CD4-positive, alpha-beta T cell (primary cell): ENCODE measurements at regions of chr6 and their contacts with region 1.

Region 1: DNA sequence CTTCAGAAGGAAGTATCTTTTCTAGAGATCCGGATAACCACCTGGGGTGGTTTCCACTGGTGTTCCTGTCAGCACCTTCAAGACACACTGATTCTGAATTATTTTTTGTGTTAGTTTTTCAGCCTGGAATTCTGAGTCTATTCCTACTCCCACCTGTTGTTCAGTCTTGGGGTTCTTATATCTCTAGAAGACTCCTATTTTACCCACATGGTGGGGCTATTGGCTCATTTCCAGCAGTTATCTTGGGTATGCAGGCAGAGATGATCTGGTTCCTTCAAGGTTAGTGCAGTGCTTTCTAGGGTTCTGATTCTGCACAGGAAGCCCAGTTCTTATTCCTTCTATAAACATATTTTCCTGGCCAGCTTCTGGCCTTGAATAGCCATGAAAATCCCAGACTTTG is 175.6 kb upstream of the PDE7B start:
- DNase-seq: peak in 12 of 14 experiments; percentile 6 to 77 (median 23)
- ATAC-seq: peak; percentile 89
- H3K4me3 ChIP-seq: no peak overlapping the region
- H3K4me3 Mint-ChIP-seq: no peak overlapping the region
- H3K27ac ChIP-seq: no peak overlapping the region
- H3K27ac Mint-ChIP-seq: no peak overlapping the region
- H3K4me1 ChIP-seq: no peaks in the 10 kb centered on the region
- H3K4me1 Mint-ChIP-seq: no peaks in the 10 kb centered on the region
- H3K27me3 ChIP-seq: no peaks in the 10 kb centered on the region
- H3K27me3 Mint-ChIP-seq: no peaks in the 10 kb centered on the region
- CTCF ChIP-seq: peak; percentile 81

Region 2: GRCh38 chr6:135451693-135452092 is 224.2 kb before region 1 on chr6:
- CTCF ChIA-PET with region 1: no interaction called
- POLR2A ChIA-PET with region 1: no interaction called
- intact Hi-C with region 1: loop called (anchors 2 to 10 kb)
- DNase-seq: peak in 3 of 14 experiments; percentile 42 to 66 (median 64)
- ATAC-seq: peak; percentile 54
- H3K4me3 ChIP-seq: no peak overlapping the region
- H3K4me3 Mint-ChIP-seq: no peak overlapping the region
- H3K27ac ChIP-seq: no peak overlapping the region
- H3K27ac Mint-ChIP-seq: no peak overlapping the region
- H3K4me1 ChIP-seq: no peaks in the 10 kb centered on the region
- H3K4me1 Mint-ChIP-seq: no peaks in the 10 kb centered on the region
- H3K27me3 ChIP-seq: no peaks in the 10 kb centered on the region
- H3K27me3 Mint-ChIP-seq: no peaks in the 10 kb centered on the region
- CTCF ChIP-seq: peak; percentile 86

Region 3: GRCh38 chr6:135851442-135852271 is 175.8 kb after region 1 on chr6 and contains the start of gene PDE7B:
- CTCF ChIA-PET with region 1: no interaction called
- POLR2A ChIA-PET with region 1: no interaction called
- intact Hi-C with region 1: loop called in 1 of 2 experiments (anchors 5 kb)
- DNase-seq: peak in 13 of 14 experiments; percentile 2 to 73 (median 29)
- ATAC-seq: peak; percentile 83
- H3K4me3 ChIP-seq: peak within 1 kb of the TSS; percentile 45
- H3K4me3 Mint-ChIP-seq: peak within 1 kb of the TSS; percentile 87
- H3K27ac ChIP-seq: peak within 1 kb of the TSS; percentile 16 to 32
- H3K27ac Mint-ChIP-seq: peak within 1 kb of the TSS; percentile 81
- H3K4me1 ChIP-seq: peaks cover 18% of the 10 kb centered on the region
- H3K4me1 Mint-ChIP-seq: peaks cover 26% of the 10 kb centered on the region
- H3K27me3 ChIP-seq: no peaks in the 10 kb centered on the region
- H3K27me3 Mint-ChIP-seq: no peaks in the 10 kb centered on the region
- CTCF ChIP-seq: no peak
- total RNA-seq, gene PDE7B: 0.25 to 0.34 TPM

Region 4: DNA sequence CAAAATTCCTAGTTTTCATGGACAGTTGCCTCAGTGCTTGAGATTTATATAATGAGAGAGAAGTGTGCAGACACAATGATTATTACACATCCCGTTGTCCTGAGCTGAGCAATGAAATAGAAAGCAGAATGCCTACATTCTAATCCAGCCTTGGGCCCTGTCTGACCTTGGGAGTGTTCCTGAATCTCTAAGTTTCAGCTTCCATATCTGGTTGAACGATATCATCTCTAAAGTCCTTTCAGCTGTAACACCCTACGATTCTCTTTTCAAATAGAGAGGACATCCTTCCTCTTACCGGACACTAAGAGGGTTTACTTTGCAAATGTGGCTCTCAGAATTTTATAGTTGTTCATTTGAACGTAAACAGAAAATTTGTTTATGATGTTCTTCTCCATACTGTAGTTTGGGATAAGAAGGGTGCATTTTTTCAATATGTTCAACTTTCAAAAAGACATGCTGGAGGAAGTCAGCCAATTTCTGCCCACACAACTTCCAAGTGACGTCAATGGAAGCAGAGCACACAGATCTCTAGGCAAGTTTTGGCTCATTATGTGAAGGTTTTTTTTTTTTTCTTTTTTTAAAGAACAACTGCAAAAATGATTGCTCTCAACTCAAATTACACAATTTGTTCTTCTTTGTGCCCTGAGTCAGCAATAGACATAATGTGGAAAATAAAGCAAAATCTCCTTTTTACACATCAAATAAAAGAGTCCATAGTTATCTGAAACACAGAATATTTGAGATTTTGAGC is 226.1 kb after region 1 on chr6:
- CTCF ChIA-PET with region 1: no interaction called
- POLR2A ChIA-PET with region 1: no interaction called
- intact Hi-C with region 1: loop called in 1 of 2 experiments (anchors 1 kb)
- DNase-seq: peak in 4 of 14 experiments; percentile 10 to 53 (median 48)
- ATAC-seq: peak; percentile 85
- H3K4me3 ChIP-seq: no peak overlapping the region
- H3K4me3 Mint-ChIP-seq: no peak overlapping the region
- H3K27ac ChIP-seq: no peak overlapping the region
- H3K27ac Mint-ChIP-seq: peak overlapping the region; percentile 35
- H3K4me1 ChIP-seq: no peaks in the 10 kb centered on the region
- H3K4me1 Mint-ChIP-seq: peaks cover 31% of the 10 kb centered on the region
- H3K27me3 ChIP-seq: no peaks in the 10 kb centered on the region
- H3K27me3 Mint-ChIP-seq: no peaks in the 10 kb centered on the region
- CTCF ChIP-seq: no peak